Activated CD4-positive, alpha-beta memory T cell treated with anti-CD3 and anti-CD28 coated beads for 36 hours (primary cell): ENCODE measurements at regions of chr11 and their contacts with region 1.

Region 1: DNA sequence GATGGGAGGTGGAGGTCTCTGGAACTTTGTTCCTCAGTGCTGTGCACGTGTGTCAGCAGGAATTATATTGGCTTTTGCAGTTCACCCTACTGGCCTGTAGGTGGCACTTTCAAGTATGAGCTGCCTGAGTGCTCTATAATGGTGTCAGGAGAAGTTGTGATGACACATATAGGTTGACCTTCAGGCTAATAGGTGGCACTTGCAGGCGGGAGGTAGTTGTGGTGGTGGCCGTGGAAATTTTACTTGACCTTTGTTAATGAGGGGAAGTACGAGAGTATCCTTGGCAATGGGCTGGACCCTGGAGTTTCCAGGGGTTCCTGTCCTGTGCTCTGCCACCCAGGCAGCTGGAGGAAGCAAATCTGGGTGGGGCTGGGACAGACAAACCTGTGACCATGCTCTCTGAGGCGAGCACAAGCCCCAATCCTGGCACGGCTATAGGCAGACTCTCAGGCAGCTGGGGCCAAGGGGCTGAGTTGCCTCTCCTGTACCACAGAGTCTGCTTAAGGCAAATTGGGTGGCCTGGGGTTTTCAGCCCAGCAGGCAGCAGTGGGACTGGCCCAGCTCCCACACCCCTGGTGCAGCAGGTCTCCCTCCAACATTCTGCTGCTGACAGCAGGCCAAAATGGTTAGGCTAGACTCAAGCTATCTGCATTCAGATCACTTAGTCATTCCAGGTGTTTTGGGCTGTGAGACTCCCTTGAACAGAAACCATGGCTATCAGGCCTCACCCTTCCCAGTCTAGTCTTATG is 147.5 kb upstream of the CTSC start:
- DNase-seq: peak; percentile 44
- H3K4me3 Mint-ChIP-seq: no peak overlapping the region
- H3K27ac Mint-ChIP-seq: no peak overlapping the region
- H3K4me1 Mint-ChIP-seq: peaks cover 2% of the 10 kb centered on the region
- H3K27me3 Mint-ChIP-seq: peaks cover 3% of the 10 kb centered on the region

Region 2: DNA sequence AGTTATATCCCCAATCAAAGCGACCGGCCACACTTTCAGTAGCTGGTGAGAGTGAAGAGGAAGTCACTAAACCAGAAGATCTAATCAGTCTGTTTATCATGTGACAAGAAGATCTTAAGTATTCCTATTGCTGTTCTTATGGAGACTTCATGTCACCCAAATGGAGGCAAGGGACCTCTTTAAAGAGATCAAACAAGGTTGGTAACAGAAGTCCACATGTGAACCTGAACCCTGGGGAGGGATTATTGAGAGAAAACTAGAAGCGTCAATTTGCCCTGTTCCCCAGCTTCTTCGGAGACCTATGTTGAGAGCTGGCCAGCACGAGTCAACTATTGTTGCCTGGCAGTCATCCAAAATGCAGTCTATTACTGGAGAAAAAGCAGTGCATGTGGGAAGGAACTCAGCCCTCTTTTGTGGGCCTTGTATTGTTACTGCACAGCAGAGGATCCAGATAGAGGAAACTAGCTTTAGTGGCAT is 70.6 kb before region 1 on chr11:
- CTCF ChIA-PET with region 1: no interaction called
- POLR2A ChIA-PET with region 1: no interaction called
- intact Hi-C with region 1: loop called (anchors 2 kb)
- DNase-seq: peak; percentile 31
- H3K4me3 Mint-ChIP-seq: no peak overlapping the region
- H3K27ac Mint-ChIP-seq: peak overlapping the region; percentile 78
- H3K4me1 Mint-ChIP-seq: peaks cover 25% of the 10 kb centered on the region
- H3K27me3 Mint-ChIP-seq: no peaks in the 10 kb centered on the region

Region 3: DNA sequence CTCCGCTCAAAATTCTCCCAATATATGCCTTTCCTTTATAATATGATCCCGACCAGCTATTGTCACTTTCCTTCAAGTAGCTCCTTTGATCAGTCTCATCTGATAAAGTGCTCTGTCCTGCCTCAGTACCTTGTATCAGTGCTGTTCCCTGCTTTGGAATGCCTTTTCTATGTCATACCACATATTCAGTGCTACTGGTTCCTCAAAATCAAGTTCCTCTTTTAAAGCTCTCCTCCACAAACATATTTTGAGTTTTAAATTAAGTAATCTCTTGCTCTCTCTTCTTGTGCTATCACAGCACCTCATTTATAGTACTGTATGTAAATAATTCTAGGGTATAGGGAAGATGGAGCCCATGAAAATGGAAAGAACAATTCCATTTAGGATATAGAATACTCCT is 10.4 kb before region 1 on chr11:
- CTCF ChIA-PET with region 1: interaction called, 12 read pairs
- POLR2A ChIA-PET with region 1: no interaction called
- intact Hi-C with region 1: no loop called
- DNase-seq: no peak
- H3K4me3 Mint-ChIP-seq: no peak overlapping the region
- H3K27ac Mint-ChIP-seq: no peak overlapping the region
- H3K4me1 Mint-ChIP-seq: no peaks in the 10 kb centered on the region
- H3K27me3 Mint-ChIP-seq: peaks cover 1% of the 10 kb centered on the region

Region 4: GRCh38 chr11:88695689-88696414 is 210.8 kb after region 1 on chr11:
- CTCF ChIA-PET with region 1: no interaction called
- POLR2A ChIA-PET with region 1: no interaction called
- intact Hi-C with region 1: no loop called
- DNase-seq: no peak
- H3K4me3 Mint-ChIP-seq: no peak overlapping the region
- H3K27ac Mint-ChIP-seq: no peak overlapping the region
- H3K4me1 Mint-ChIP-seq: no peaks in the 10 kb centered on the region
- H3K27me3 Mint-ChIP-seq: peaks cover 1% of the 10 kb centered on the region